Natural killer cell (primary cell): ENCODE measurements at regions of chr7 and their contacts with region 1.

Region 1: GRCh38 chr7:121107923-121108498 is 119.5 kb downstream of the CPED1 start:
- DNase-seq: peak in 1 of 2 donors; percentile 69
- ATAC-seq: peak in 2 of 3 donors; percentile 72 to 82
- H3K4me3 ChIP-seq: no peak overlapping the region
- H3K4me3 Mint-ChIP-seq: no peak overlapping the region
- H3K27ac ChIP-seq: no peak overlapping the region
- H3K27ac Mint-ChIP-seq: no peak overlapping the region
- H3K4me1 ChIP-seq: no peaks in the 10 kb centered on the region
- H3K4me1 Mint-ChIP-seq: no peaks in the 10 kb centered on the region
- H3K27me3 ChIP-seq: peaks cover 2% of the 10 kb centered on the region
- H3K27me3 Mint-ChIP-seq: no peaks in the 10 kb centered on the region
- CTCF ChIP-seq: peak; percentile 90

Region 2: DNA sequence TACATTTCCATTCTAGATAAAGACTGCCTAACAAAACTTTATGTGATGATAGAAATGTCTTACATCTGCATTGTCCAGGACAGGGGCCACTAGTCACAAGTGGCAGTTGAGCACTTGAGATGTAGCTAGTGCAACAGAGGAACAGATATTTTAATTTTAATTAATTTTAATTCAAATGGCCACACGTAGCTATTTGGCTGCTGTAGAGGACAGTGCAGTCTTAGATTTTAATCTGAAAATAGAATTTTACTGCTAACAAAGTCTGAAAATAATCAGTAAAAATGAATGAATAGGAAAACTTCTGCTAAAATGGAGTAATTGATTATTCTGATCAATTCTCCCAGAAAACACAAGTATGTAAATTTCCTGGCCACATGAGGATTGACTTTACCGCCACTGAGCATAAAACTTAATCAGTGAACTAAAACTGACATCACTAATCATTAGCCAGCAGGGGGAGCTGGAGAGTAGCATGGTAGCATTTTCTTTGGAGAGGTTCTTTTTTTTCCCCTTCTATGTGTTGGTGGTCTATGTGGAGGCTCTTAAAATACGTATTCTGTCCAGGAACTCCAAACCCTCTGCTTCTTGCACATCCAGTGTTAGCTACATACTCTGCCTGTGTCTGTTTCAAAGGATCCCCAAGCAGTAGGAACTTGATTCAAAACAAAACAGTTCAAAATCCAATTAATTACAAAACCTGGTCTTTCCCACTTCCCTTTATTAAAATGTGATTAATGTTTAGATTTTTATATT is 302.2 kb before region 1 on chr7:
- intact Hi-C with region 1: loop called (anchors 5 kb)
- DNase-seq: peak in 1 of 2 donors; percentile 75
- ATAC-seq: peak; percentile 47 to 72 (median 57)
- H3K4me3 ChIP-seq: no peak overlapping the region
- H3K4me3 Mint-ChIP-seq: no peak overlapping the region
- H3K27ac ChIP-seq: no peak overlapping the region
- H3K27ac Mint-ChIP-seq: no peak overlapping the region
- H3K4me1 ChIP-seq: no peaks in the 10 kb centered on the region
- H3K4me1 Mint-ChIP-seq: no peaks in the 10 kb centered on the region
- H3K27me3 ChIP-seq: no peaks in the 10 kb centered on the region
- H3K27me3 Mint-ChIP-seq: no peaks in the 10 kb centered on the region
- CTCF ChIP-seq: peak; percentile 85